GM13977 (cell line): ENCODE measurements at regions of chr11 and their contacts with region 1.

Region 1: GRCh38 chr11:20881328-20882079 is 212.1 kb downstream of the NELL1 start:
- DNase-seq: no peak
- CTCF ChIP-seq: no peak

Region 2: DNA sequence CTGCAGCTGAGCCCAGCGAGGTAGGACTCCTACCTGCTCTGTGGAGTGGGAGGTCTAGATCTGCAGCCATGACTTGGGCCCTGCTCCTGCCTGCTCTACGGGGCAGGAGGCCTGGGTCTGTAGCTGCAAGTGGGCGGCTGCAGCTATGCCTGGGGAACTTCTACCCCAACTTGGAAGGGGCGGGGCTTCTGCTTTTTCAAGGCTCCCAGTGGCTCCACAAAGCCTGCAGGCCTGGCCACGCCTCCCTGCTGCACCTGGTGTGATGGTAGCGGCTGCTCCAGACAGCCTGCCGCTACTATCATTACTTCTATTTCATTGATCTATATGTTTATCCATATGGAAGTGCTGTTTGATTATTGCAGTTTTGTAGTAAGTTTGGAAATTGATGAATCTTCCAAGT is 90.9 kb before region 1 on chr11:
- in situ Hi-C with region 1: loop called (anchors 25 kb)
- DNase-seq: no peak
- CTCF ChIP-seq: no peak

Region 3: GRCh38 chr11:20808328-20808727 is 73.2 kb before region 1 on chr11:
- in situ Hi-C with region 1: no loop called
- DNase-seq: no peak
- CTCF ChIP-seq: no peak

Region 4: DNA sequence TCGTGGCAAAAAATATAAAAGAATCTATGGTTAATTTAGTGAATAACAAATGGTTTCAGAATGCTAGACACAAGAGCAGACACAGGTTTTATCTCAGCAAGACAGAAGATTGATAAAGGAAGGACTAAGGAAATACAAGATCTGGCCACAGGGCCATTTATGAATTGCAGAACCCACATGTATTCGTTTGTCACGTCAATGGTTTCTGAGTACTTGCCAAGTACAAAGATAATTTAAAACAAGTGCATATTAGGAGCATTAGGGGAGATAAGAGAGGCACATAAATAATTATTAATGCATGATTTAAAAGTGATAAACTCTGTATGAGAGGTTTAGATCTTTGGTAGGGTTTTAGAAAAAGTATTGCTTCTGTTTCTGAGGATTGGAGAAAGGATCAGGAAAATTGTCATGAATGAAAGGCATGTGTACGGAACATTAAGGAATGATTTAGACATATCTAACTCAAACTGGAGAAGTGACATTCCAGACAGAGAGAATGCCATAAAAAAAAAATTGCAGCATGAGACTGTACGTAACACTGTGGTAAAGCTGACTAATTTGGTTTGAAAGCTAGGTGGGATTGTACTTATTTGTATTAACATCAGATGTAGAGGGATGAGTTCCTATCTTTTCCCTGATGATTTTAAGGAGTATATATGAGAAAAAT is 515.0 kb after region 1 on chr11:
- in situ Hi-C with region 1: no loop called
- DNase-seq: no peak
- CTCF ChIP-seq: no peak